ENCODE measurements at regions of chr20 and their contacts with region 1.

Region 1: DNA sequence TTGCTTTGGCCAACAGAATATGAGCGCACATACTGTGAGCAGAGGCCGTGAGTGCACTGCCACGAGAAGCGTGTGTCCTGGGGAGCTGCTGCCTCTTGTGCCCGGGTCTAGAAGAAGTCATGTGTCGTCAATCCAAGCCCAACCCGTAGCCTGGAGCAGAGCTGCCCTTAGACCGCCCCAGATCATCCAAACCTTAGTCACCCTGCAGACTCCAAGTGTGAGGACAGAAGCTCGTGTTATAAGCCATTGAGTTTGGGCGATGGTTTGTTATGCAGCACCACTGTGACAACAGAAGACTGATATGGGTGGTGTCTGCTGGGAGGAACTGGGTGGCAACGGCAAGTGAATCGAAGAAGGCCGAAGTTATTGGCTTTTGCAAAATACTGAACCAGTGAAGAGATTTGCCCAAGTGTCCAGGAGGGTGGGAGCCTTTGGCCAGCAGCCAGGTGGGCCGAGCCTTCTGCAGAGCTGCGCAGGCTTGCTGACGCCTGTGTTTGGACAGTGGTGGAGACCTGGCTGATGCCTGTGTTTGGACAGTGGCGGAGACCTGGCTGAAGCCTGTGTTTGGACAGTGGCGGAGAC is 101.3 kb upstream of the SULF2 start:
- DNase-seq: no peak
- ATAC-seq: no peak
- H3K4me3 ChIP-seq: no peak overlapping the region
- H3K27ac ChIP-seq: no peak overlapping the region
- H3K4me1 ChIP-seq: no peaks in the 10 kb centered on the region
- H3K27me3 ChIP-seq: no peaks in the 10 kb centered on the region
- CTCF ChIP-seq: no peak
- POLR2A ChIP-seq: no peak

Region 2: GRCh38 chr20:47821481-47822439 is 64.8 kb before region 1 on chr20:
- intact Hi-C with region 1: no loop called
- DNase-seq: no peak
- ATAC-seq: no peak
- H3K4me3 ChIP-seq: no peak overlapping the region
- H3K27ac ChIP-seq: no peak overlapping the region
- H3K4me1 ChIP-seq: no peaks in the 10 kb centered on the region
- H3K27me3 ChIP-seq: no peaks in the 10 kb centered on the region
- CTCF ChIP-seq: no peak
- POLR2A ChIP-seq: no peak

Region 3: DNA sequence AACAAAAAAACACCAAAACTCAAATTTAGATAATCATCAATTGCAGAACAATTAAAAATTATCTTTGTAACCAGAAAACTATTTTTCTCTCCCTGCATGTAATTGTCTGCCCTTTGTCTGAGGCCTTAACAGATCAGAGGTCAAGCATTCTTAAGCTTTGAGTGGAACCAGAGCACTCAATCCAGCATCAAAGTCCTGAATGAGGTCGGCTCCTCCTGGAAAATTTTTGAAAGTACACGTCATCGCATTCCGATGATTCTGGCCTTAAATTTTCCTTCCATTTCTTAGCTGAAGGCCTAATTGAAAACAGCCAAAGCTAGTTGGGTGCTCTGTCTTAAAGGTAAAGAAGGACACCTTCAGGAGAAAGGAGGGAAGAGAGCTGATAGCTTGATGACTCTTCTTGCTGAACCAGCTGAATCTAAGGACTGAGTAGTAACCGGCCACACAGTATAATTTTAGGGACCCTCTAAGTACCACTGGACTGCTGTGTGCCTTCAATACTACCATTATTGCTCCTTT is 409.0 kb after region 1 on chr20:
- intact Hi-C with region 1: no loop called
- DNase-seq: peak in 2 of 4 donors; percentile 27 to 49
- ATAC-seq: peak; percentile 80
- H3K4me3 ChIP-seq: no peak overlapping the region
- H3K27ac ChIP-seq: peak overlapping the region in 3 of 4 donors; percentile 9 to 61 (median 44)
- H3K4me1 ChIP-seq: peaks cover 4% of the 10 kb centered on the region
- H3K27me3 ChIP-seq: no peaks in the 10 kb centered on the region
- CTCF ChIP-seq: peak in 4 of 7 experiments; percentile 18 to 34 (median 20)
- POLR2A ChIP-seq: no peak

Region 4: DNA sequence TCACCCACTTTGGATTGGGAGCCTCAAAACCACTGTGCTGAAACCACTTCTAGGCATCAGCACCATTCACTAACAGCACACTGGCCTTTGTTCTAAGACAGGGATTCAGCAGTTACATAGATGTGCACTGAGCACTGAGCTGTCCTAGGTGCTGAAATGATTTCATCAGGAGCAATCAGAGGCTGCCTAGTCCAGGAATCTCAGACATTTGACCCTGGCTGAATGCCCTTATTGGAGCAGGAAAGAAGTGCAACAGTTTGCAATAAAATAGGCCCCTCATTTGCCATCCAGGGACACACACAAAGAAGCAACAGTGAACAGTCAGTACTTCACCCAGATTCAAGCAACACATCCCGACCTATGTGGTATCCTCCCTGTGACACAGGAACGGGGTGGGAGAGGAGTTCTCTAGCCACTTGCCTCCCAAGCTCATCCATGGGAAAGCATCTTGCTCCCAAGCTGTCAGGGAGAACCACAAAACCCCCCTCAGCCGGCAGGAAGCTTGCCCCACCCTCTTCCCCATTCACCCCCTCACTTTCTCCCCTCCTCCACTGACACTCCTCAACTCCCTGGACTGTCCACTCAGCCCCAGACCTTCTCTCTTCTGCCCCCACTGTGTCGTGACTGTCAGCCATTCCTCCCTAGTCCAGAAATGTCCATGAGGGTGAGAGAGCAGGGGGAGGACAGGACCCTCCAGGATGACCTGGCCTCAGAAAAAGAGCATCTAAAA is 636.8 kb after region 1 on chr20:
- intact Hi-C with region 1: loop called (anchors 5 kb)
- DNase-seq: peak in 3 of 4 donors; percentile 18 to 34 (median 22)
- ATAC-seq: no peak
- H3K4me3 ChIP-seq: no peak overlapping the region
- H3K27ac ChIP-seq: no peak overlapping the region
- H3K4me1 ChIP-seq: no peaks in the 10 kb centered on the region
- H3K27me3 ChIP-seq: no peaks in the 10 kb centered on the region
- CTCF ChIP-seq: no peak
- POLR2A ChIP-seq: no peak